ENCODE measurements at regions of chr2 and their contacts with region 1.

Region 1: GRCh38 chr2:227106845-227107759 is 56.9 kb downstream of the COL4A4 start:
- DNase-seq: peak; percentile 65
- ATAC-seq: no peak
- H3K4me3 Mint-ChIP-seq: no peak overlapping the region
- H3K27ac Mint-ChIP-seq: no peak overlapping the region
- H3K4me1 Mint-ChIP-seq: no peaks in the 10 kb centered on the region
- H3K27me3 Mint-ChIP-seq: no peaks in the 10 kb centered on the region
- CTCF ChIP-seq: peak; percentile 60

Region 2: DNA sequence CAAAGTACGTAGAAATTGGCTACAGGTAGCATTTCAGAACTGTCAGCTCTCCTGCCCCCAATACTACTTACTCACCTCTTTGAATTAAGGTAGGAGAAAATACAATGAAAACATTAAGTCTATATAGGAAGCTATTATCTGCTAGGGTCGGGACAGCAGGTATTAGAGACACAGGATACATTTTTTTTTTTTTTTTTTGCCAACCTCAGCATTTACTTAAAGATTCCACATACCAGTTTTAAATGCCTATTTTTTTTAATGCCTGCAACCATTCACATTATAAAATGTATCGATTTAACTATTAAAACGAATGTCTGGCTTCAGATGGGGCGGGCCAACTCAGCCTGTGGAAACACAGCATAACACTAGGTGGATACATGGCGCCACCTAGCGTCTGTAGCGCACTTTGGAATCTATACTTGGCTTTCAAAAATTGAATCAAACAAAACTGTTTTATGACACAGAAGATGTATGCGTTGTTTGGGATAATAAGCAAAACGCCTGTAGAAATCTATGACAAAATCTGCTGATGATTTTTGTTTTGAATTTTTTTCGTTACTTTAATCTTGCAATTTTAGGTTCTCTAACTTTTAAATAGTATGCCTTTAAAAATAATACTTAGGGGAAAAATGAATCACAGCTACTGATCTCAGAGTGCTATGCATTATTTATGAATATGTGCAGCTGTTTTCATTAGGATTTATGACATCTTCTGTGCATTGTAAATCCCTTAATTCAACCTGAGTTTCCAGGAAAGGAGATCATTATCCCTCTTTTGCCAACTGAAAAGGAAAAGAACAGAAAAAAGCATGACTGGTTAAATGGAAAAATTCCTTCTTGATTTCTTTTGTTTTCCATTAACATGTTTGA is 1446.6 kb before region 1 on chr2:
- CTCF ChIA-PET with region 1: no interaction called
- POLR2A ChIA-PET with region 1: no interaction called
- intact Hi-C with region 1: loop called (anchors 10 kb)
- DNase-seq: peak; percentile 90
- ATAC-seq: peak; percentile 81
- H3K4me3 Mint-ChIP-seq: no peak overlapping the region
- H3K27ac Mint-ChIP-seq: no peak overlapping the region
- H3K4me1 Mint-ChIP-seq: no peaks in the 10 kb centered on the region
- H3K27me3 Mint-ChIP-seq: peaks cover 17% of the 10 kb centered on the region
- CTCF ChIP-seq: peak; percentile 74

Region 3: GRCh38 chr2:226813148-226813701 is 293.9 kb before region 1 on chr2:
- CTCF ChIA-PET with region 1: no interaction called
- POLR2A ChIA-PET with region 1: no interaction called
- intact Hi-C with region 1: loop called (anchors 10 kb)
- DNase-seq: peak; percentile 24
- ATAC-seq: no peak
- H3K4me3 Mint-ChIP-seq: no peak overlapping the region
- H3K27ac Mint-ChIP-seq: no peak overlapping the region
- H3K4me1 Mint-ChIP-seq: no peaks in the 10 kb centered on the region
- H3K27me3 Mint-ChIP-seq: peaks cover 16% of the 10 kb centered on the region
- CTCF ChIP-seq: peak; percentile 30

Region 4: DNA sequence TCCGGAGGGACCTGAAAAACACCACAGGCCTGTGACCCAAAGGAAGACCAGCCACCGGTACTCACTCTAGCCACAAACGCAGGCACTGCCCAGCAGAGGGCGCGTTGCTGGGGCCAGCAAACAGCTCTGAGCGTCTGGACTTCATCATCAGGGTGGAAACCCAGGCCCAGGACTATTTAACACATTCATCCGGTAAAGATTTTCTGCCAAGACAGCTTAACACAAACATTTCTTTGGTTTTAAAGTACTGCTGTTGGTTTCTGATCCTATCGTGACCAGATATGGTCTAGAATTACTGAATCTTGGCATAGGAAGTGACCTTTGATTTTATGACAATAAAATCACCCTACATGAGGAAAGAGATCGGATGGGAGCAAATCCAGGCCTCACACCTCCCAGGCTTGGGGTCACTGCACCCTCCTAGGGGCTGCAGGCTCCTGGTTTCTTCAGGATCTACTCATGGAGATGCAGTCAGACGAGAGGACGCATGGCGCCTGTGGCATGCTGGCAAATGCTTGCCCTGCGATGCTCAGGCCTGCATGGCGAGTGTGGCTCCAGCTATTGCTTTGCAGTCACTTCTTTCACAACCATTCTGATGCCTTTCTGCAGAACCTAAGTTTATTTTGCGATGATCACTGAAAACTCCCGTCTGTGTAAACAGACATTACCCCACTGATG is 73.5 kb before region 1 on chr2:
- CTCF ChIA-PET with region 1: no interaction called
- POLR2A ChIA-PET with region 1: no interaction called
- intact Hi-C with region 1: no loop called
- DNase-seq: peak; percentile 52
- ATAC-seq: no peak
- H3K4me3 Mint-ChIP-seq: no peak overlapping the region
- H3K27ac Mint-ChIP-seq: no peak overlapping the region
- H3K4me1 Mint-ChIP-seq: no peaks in the 10 kb centered on the region
- H3K27me3 Mint-ChIP-seq: peaks cover 18% of the 10 kb centered on the region
- CTCF ChIP-seq: peak; percentile 38

Region 5: DNA sequence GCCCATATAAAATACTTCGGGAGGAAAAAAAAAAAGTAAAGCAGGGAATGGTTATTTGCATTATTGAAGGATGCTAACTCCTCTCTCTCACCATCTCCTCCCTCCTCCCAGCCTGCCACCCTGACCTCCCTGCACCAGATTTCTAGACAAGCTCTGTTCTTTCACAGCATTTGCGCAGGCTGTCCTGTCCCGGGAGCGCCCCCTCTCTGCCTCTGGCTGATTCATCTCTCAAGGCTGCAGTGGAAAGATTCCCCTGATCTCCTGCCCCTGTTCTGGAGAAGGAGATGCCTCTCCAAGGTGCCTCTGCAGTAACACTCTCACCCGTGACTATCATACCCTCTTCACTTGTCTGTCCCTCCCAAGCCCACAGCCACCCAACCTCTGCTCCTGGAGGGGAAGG is 18.4 kb after region 1 on chr2:
- CTCF ChIA-PET with region 1: no interaction called
- POLR2A ChIA-PET with region 1: no interaction called
- intact Hi-C with region 1: no loop called
- DNase-seq: peak; percentile 5
- ATAC-seq: no peak
- H3K4me3 Mint-ChIP-seq: no peak overlapping the region
- H3K27ac Mint-ChIP-seq: no peak overlapping the region
- H3K4me1 Mint-ChIP-seq: no peaks in the 10 kb centered on the region
- H3K27me3 Mint-ChIP-seq: peaks cover 10% of the 10 kb centered on the region
- CTCF ChIP-seq: no peak

Region 6: DNA sequence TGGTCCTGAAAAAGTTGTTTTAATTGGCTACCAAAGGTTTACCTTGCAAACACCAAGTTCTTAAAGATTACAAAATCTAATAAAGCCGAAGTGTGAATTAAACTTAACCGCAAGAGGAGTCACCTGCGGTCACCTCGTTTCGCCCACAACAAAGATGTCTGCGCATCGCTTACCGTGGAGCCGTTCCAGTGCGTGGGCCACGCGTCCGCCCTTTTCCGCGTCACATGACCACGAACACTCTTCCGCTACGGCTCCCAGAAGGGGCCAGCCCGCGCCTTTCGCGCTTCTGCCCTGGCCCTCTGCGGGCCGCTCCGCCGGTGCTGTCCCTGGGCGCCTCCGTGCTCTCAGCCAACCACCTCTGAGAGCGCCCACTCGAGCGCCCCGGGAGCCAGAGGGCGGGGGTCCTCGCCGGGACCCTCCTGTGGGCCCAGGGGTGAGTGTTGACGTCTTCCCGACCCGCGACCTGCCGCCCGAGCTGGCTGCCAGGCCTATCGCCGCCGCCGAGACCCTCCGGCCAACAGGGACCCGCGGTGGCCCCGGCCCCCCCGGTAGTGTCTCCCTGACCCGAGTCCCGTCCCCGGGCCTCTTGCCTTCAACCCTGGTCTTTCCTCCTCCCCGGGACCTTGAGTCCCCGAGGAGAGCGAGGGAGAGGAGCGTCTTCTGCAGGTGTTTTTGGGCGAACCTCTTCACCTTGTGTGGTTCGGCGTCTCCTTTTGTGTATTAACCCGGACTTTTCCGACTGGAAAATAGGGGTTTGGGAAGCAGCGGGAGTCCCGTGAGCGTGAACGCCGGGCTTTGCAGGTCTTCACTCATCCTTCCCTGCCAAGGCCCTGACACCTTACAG is 218.1 kb after region 1 on chr2 and contains the start of gene MFF:
- CTCF ChIA-PET with region 1: no interaction called
- POLR2A ChIA-PET with region 1: no interaction called
- intact Hi-C with region 1: no loop called
- DNase-seq: peak; percentile 98
- ATAC-seq: peak; percentile 95
- H3K4me3 Mint-ChIP-seq: peak within 1 kb of the TSS; percentile 90
- H3K27ac Mint-ChIP-seq: peak within 1 kb of the TSS; percentile 95
- H3K4me1 Mint-ChIP-seq: peaks cover 29% of the 10 kb centered on the region
- H3K27me3 Mint-ChIP-seq: no peaks in the 10 kb centered on the region
- CTCF ChIP-seq: peak; percentile 40
- total RNA-seq, gene MFF: 66.5 to 73.9 TPM

Measured in activated CD8-positive, alpha-beta T cell treated with anti-CD3 and anti-CD28 coated beads for 36 hours (primary cell).